Right cardiac atrium (tissue), 5 donors: ENCODE measurements at regions of chr5 and their contacts with region 1.

Region 1: GRCh38 chr5:67815455-67816391 is 399.8 kb upstream of the PIK3R1 start:
- DNase-seq: peak in 1 of 3 donors; percentile 71
- ATAC-seq: peak; percentile 92 to 95
- H3K4me3 ChIP-seq: no peak overlapping the region
- H3K27ac ChIP-seq: peak overlapping the region; percentile 81
- H3K4me1 ChIP-seq: peaks cover 2% of the 10 kb centered on the region
- H3K27me3 ChIP-seq: no peaks in the 10 kb centered on the region

Region 2: DNA sequence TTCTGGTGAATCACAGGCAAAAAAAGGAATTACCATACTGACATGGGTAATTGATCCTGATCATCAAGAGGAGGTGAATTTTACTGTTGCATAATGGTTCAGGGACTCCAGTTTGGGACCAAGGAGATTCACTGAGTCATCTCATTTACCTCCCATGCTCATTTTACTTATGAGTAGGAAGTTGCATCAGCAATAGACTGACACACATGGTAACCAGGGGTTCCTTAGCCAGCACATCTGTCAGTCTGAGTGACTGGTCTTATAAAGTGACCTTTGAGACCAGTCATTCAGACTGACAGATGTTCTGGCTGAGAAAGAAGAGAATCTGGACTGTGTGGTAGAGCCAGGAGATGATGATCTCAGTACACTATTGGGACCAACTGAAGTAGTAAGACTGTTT is 234.5 kb before region 1 on chr5:
- intact Hi-C with region 1: no loop called
- DNase-seq: no peak
- ATAC-seq: no peak
- H3K4me3 ChIP-seq: no peak overlapping the region
- H3K27ac ChIP-seq: no peak overlapping the region
- H3K4me1 ChIP-seq: no peaks in the 10 kb centered on the region
- H3K27me3 ChIP-seq: no peaks in the 10 kb centered on the region

Region 3: DNA sequence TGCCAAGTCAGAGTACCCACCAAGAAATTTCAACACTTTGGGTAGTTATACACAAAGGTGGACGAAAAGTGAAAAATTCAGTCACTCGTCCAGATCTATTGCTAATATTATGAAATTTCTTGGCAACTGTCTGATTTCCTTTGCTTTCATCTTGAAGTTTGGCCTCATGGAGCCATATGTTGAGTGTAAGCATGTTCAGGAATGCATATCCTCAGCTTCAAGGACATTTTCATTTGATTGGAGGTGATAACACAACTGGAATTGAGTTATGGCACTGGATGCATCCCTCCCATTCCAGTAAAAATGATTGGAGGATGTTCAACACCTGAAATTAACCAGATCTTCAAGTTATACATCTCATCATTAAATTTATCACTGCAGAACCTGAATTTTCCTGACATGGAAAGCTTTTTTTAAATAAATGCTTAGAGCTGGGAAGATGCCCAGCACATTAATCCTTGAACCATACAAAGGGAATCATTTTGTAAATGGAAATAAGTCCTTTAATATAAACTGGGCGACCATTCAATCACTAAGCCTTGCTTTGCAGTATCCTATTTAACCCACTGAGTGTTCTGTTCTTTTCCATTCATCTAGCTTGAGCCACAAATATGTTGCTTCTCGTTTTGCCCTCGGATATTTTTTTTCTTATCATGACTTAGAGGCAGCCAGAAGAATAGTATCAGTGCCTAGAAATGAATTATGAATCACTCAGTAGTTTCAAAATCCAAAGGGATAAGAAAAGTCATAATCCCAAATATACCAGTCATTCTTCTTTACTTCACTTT is 126.1 kb after region 1 on chr5:
- intact Hi-C with region 1: loop called in 1 of 4 experiments (anchors 10 kb)
- DNase-seq: no peak
- ATAC-seq: peak; percentile 58 to 86
- H3K4me3 ChIP-seq: no peak overlapping the region
- H3K27ac ChIP-seq: no peak overlapping the region
- H3K4me1 ChIP-seq: no peaks in the 10 kb centered on the region
- H3K27me3 ChIP-seq: no peaks in the 10 kb centered on the region

Region 4: GRCh38 chr5:68261569-68262065 is 445.9 kb after region 1 on chr5:
- intact Hi-C with region 1: loop called in 1 of 4 experiments (anchors 10 kb)
- DNase-seq: no peak
- ATAC-seq: peak in 1 of 2 donors; percentile 12
- H3K4me3 ChIP-seq: no peak overlapping the region
- H3K27ac ChIP-seq: peak overlapping the region; percentile 47
- H3K4me1 ChIP-seq: peaks cover 25% of the 10 kb centered on the region
- H3K27me3 ChIP-seq: no peaks in the 10 kb centered on the region